Heart left ventricle (tissue), 16 donors: ENCODE measurements at regions of chr1 and their contacts with region 1.

Region 1: DNA sequence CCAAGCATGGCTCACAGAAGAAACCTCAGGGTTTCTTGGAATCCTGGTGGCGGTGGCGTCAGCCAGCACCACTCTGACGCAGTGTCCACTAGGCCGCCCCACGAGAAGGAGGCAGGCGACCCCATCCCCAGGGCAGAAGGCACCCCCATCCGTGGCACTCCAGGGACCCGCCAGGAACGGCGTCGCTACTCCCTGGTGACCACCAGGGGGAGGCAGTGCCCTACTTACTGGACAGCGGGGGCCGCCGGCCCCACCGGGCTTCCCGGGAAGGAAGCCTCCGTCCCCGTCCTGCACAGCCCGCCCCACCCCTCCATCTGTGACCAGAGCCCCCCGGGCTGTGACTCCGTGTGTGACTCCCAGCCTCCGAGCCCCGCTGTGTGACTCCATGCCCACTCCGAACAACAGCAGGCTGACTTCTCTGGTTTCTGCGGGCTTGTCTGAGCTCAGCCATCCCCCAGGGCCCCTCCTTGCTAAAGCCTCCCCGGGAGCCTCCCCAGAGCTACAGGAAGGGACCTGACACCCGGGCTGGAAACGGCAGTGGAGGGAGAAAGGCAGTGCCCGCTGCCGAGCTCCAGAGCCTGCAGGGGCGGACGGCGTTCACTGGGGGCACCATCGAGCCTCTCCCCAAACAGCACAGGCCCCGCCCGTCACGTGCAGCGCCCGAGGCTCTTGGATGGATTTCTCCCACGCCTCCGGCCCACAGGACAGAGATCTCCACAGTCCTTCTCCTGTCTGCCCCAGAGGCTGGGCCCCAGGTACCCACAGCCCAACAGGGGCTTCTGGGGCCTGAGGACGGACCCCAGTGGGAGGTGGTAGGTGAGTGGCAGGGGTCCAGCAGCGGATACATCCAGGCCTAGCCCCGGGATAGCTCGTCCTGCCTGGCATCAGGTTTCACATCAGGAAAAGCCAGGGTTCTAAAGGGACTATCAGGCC is 21.1 kb downstream of the KIF17 start:
- DNase-seq: peak; percentile 83 to 91 (median 88)
- ATAC-seq: peak; percentile 86 to 94 (median 93)
- H3K4me3 ChIP-seq: peak overlapping the region; percentile 32 to 70 (median 62)
- H3K27ac ChIP-seq: peak overlapping the region; percentile 31 to 88 (median 77)
- H3K4me1 ChIP-seq: peaks cover 0 to 17% (median 5%) of the 10 kb centered on the region in 12 donors
- H3K27me3 ChIP-seq: no peaks in the 10 kb centered on the region
- CTCF ChIP-seq: peak; percentile 81 to 98 (median 91)
- POLR2A ChIP-seq: no peak

Region 2: GRCh38 chr1:20732588-20733360 is 36.1 kb after region 1 on chr1 and contains the start of gene SH2D5:
- intact Hi-C with region 1: loop called in 1 of 10 experiments (anchors 5 kb)
- DNase-seq: peak in 4 of 5 donors; percentile 41 to 63 (median 51)
- ATAC-seq: peak; percentile 7 to 78 (median 64)
- H3K4me3 ChIP-seq: peak within 1 kb of the TSS; percentile 42 to 69 (median 56)
- H3K27ac ChIP-seq: peak within 1 kb of the TSS in 6 of 12 donors; percentile 19 to 57 (median 38)
- H3K4me1 ChIP-seq: peaks cover 0 to 32% (median 13%) of the 10 kb centered on the region in 12 donors
- H3K27me3 ChIP-seq: peaks cover 4 to 44% (median 26%) of the 10 kb centered on the region in 9 donors
- CTCF ChIP-seq: peak in 9 of 12 donors; percentile 9 to 51 (median 31)
- POLR2A ChIP-seq: no peak
- total RNA-seq, gene SH2D5: 0.30 to 0.67 TPM in 2 of 9 donors, not detected in the others

Region 3: DNA sequence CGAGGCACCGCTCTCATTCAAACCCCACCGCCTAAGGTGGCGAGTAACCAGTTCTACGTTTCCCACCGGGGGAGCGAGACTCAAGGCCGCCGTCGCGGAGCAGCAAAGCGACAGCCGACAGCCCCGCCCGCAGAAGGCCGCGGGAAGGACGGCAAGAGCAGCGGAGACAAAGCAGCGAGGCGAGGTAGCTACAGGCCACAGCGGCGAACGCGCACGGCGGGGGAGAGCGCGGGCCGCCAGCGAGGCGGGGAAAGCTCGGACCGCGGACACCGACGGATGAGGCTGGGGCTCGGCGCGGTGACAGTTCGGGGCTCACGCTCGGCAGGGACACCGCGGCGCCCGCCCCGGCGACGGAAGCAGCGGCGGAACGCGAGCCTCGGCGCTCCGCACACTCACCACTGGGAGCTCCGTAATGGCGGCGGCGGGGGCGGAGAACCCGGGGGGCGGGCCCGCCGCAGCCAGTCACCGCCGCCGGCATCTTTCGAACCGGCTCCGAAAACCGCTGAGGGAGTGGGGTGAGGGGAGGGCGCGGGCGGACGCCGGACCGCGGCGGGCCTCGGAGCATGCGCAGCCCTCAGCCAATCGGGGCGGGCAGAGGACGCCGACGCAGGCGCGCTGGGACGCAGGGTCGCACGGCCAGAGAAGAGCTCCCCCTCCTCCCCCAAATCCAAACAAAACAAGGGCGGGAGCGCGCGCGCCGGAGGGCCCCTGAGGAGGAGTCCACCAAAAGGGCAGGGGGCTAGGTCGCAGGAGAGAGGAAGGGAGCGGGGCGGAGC is 89.8 kb after region 1 on chr1:
- intact Hi-C with region 1: loop called in 1 of 10 experiments (anchors 5 kb)
- DNase-seq: peak; percentile 95 to 99 (median 96)
- ATAC-seq: peak; percentile 87 to 97 (median 94)
- H3K4me3 ChIP-seq: peak overlapping the region; percentile 77 to 99 (median 95)
- H3K27ac ChIP-seq: peak overlapping the region; percentile 84 to 100 (median 98)
- H3K4me1 ChIP-seq: peaks cover 4 to 50% (median 30%) of the 10 kb centered on the region in 12 donors
- H3K27me3 ChIP-seq: no peaks in the 10 kb centered on the region
- CTCF ChIP-seq: peak in 1 of 12 donors; percentile 12
- POLR2A ChIP-seq: peak in 1 of 2 donors; percentile 79

Region 4: GRCh38 chr1:20981915-20982314 is 285.3 kb after region 1 on chr1:
- intact Hi-C with region 1: loop called in 1 of 10 experiments (anchors 10 kb)
- DNase-seq: no peak
- ATAC-seq: peak in 2 of 4 donors; percentile 45 to 77
- H3K4me3 ChIP-seq: no peak overlapping the region
- H3K27ac ChIP-seq: no peak overlapping the region
- H3K4me1 ChIP-seq: peaks cover 0 to 7% (median 0%) of the 10 kb centered on the region in 12 donors
- H3K27me3 ChIP-seq: no peaks in the 10 kb centered on the region
- CTCF ChIP-seq: peak in 10 of 12 donors; percentile 15 to 59 (median 41)
- POLR2A ChIP-seq: no peak

Region 5: GRCh38 chr1:21200767-21201166 is 504.1 kb after region 1 on chr1:
- intact Hi-C with region 1: loop called in 8 of 10 experiments (anchors 1 to 5 kb)
- DNase-seq: no peak
- ATAC-seq: no peak
- H3K4me3 ChIP-seq: no peak overlapping the region
- H3K27ac ChIP-seq: no peak overlapping the region
- H3K4me1 ChIP-seq: no peaks in the 10 kb centered on the region
- H3K27me3 ChIP-seq: no peaks in the 10 kb centered on the region
- CTCF ChIP-seq: no peak
- POLR2A ChIP-seq: no peak

Region 6: GRCh38 chr1:21368515-21369289 is 672.0 kb after region 1 on chr1:
- intact Hi-C with region 1: loop called in 1 of 10 experiments (anchors 10 kb)
- DNase-seq: peak; percentile 80 to 88 (median 83)
- ATAC-seq: peak; percentile 79 to 96 (median 94)
- H3K4me3 ChIP-seq: peak overlapping the region in 1 of 12 donors; percentile 12
- H3K27ac ChIP-seq: peak overlapping the region in 1 of 12 donors; percentile 17
- H3K4me1 ChIP-seq: peaks cover 0 to 12% (median 1%) of the 10 kb centered on the region in 12 donors
- H3K27me3 ChIP-seq: no peaks in the 10 kb centered on the region
- CTCF ChIP-seq: peak; percentile 96 to 100 (median 99)
- POLR2A ChIP-seq: no peak